G401 (cell line): ENCODE measurements at regions of chr15 and their contacts with region 1.

Region 1: GRCh38 chr15:89436570-89437316 is 59.6 kb downstream of the RHCG start:
- DNase-seq: no peak

Region 2: GRCh38 chr15:89361451-89362202 is 75.1 kb before region 1 on chr15:
- in situ Hi-C with region 1: loop called (anchors 5 kb)
- DNase-seq: peak; percentile 51

Region 3: DNA sequence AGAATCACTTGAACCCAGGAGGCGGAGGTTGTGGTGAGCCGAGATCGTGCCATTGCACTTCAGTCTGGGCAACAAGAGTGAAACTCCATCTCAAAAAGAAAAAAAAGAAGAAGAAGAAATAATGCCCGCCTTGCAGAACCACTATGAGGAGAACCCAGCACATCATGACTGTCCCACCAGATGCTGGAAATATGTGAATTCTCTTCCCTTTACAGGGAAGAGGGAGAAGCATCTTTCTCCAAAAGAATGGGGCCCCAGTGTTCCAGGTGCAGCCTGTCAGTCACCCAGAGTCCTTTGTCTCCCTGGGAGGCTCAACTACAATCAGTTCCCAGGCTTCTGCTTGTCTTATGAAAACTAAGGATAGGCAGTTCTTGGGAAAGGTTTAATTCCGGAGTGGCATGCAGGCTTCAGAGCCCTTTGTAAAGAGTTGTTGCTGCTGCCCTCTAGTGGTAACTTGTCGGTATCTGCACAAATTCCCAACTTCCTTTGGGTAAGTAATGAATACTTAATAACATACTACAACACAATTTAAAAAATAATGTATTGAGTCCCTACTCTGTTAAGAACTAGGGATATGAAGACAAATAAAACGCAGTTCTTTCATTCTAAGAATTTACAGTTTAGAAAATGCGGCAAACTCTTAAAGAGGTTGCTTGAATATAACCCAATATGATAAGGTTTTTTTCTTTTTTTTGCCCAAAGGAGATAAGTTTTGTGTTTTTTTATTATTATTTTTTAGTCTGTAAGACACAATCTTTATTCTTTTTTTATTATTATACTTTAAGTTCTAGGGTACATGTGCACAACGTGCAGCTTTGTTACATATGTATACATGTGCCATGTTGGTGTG is 119.9 kb after region 1 on chr15:
- in situ Hi-C with region 1: no loop called
- DNase-seq: peak; percentile 81

Region 4: DNA sequence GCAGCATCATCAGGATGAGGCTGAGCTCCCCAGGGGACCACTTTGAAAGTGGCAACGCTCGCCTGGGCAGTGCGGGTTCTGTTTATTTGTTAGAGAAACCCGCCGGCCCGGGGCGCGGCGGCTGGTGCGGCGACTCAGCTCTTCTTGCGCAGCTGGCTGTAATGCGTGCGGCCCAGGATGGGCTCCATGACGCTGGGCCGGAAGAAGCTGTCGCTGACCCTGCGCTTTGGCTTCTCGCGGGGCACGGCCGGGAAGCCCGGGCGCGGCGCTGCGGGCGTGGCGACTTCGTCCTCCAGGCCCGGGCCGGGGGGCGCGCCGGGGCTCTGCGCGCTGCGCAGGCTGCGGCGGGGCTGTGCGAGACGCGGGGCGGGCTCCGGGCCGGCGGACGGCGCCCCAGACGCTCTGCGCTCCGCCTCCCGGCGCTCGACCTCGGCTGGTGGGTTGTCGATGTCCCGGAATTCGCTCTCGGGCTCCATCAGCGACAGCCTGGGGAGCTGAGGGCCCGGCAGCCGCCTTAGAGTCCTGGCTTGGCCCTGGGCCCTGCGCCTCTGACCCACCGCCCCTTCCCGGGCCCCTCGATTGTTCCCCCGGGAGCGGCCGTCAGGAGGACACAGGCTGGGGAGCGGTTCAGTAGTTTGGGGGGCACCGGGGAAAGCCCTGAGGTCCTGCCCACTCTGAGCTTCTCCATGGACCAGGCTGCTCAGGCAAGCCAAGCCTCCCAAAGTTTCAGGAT is 228.9 kb after region 1 on chr15:
- in situ Hi-C with region 1: no loop called
- DNase-seq: no peak